Endothelial cell of umbilical vein (primary cell): ENCODE measurements at regions of chr17 and their contacts with region 1.

Region 1: GRCh38 chr17:80826955-80827645 is 164.5 kb upstream of the CHMP6 start:
- DNase-seq: peak; percentile 95
- H3K4me3 ChIP-seq: no peak overlapping the region
- H3K27ac ChIP-seq: peak overlapping the region; percentile 92
- H3K4me1 ChIP-seq: peaks cover 20% of the 10 kb centered on the region
- H3K27me3 ChIP-seq: no peaks in the 10 kb centered on the region
- CTCF ChIP-seq: peak in 1 of 2 donors; percentile 3
- POLR2A ChIP-seq: peak; percentile 10

Region 2: GRCh38 chr17:80586846-80587228 is 240.3 kb before region 1 on chr17:
- CTCF ChIA-PET with region 1: no interaction called
- POLR2A ChIA-PET with region 1: no interaction called
- dilution Hi-C with region 1: no loop called
- intact Hi-C with region 1: no loop called
- DNase-seq: no peak
- H3K4me3 ChIP-seq: no peak overlapping the region
- H3K27ac ChIP-seq: no peak overlapping the region
- H3K4me1 ChIP-seq: no peaks in the 10 kb centered on the region
- H3K27me3 ChIP-seq: no peaks in the 10 kb centered on the region
- CTCF ChIP-seq: no peak
- POLR2A ChIP-seq: no peak

Region 3: GRCh38 chr17:80761110-80761871 is 65.8 kb before region 1 on chr17:
- CTCF ChIA-PET with region 1: interaction called, 4 read pairs
- POLR2A ChIA-PET with region 1: no interaction called
- dilution Hi-C with region 1: no loop called
- intact Hi-C with region 1: loop called (anchors 1 kb)
- DNase-seq: peak; percentile 87
- H3K4me3 ChIP-seq: peak overlapping the region in 1 of 3 experiments; percentile 7
- H3K27ac ChIP-seq: peak overlapping the region; percentile 78
- H3K4me1 ChIP-seq: peaks cover 59% of the 10 kb centered on the region
- H3K27me3 ChIP-seq: no peaks in the 10 kb centered on the region
- CTCF ChIP-seq: no peak
- POLR2A ChIP-seq: peak; percentile 49

Region 4: DNA sequence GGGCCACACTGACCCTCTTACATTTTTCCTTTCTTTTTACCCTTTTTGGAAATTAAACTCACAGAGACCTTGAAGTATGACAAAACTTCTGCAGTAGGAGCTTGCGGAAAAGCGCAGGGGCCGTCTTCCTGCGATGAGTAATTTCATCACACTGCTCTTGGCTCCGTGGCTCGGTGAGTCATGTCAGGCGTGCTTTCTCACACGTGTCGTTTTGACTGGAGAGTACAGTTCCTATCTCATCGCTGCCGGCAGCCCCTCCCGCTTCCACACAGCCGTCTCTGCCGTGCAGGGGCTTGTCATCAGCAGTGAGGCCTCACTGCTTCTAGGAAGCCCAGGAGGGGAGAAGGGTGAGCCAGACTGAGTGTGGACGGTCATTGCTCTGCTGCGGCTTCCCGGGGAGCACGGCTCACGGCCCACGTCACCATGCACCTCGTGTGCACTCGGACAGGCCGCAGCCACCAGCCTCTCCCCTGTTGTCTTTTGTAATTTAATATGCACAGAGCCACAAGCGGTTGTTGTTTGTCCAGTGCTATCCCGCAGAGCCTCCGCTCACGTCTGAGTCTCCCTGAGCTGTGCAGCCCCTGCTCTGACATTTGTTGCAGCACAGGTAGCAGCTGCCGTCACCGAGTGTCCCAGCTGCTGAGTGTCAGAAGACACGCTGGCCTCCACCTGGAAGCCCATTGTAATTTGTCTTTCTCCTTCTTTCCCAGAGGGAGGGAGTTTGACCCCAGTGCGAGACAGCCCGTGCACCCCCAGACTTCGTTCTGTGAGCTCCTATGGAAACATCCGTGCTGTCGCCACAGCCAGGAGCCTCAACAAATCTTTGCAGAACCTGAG is 65.1 kb after region 1 on chr17:
- CTCF ChIA-PET with region 1: interaction called, 8 read pairs
- POLR2A ChIA-PET with region 1: no interaction called
- dilution Hi-C with region 1: no loop called
- intact Hi-C with region 1: loop called (anchors 1 kb)
- DNase-seq: peak; percentile 91
- H3K4me3 ChIP-seq: no peak overlapping the region
- H3K27ac ChIP-seq: peak overlapping the region; percentile 79
- H3K4me1 ChIP-seq: peaks cover 28% of the 10 kb centered on the region
- H3K27me3 ChIP-seq: no peaks in the 10 kb centered on the region
- CTCF ChIP-seq: no peak
- POLR2A ChIP-seq: no peak